GM10248 (cell line): ENCODE measurements at regions of chr18 and their contacts with region 1.

Region 1: DNA sequence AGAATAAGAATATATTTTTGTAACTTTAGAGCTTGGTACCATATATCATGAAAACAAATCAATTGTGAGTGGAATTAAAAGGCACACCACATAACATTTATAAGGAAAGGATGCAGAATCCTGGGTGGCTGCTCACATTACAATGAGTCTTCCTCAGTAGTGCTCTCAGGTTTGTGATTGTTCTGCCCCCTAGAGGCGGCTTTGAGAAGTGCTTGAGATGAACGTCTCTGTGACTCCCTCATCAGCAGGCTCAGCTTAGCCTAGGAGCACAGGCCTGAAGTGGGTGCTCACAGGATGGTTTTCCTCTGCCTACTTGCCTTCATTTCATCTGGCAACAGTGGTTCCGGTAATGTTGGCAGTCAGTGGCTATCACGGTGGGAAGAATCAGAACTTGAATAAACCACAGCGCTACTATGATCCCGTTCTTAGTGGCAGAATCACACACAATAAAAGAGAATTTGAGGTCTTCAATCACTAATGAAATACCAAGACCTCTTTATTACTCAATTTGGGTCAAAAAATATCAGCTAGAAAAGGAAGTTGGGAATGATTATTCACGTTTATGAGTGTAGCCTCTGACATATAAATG is 38.1 kb upstream of the B4GALT6 start:
- DNase-seq: peak; percentile 79
- CTCF ChIP-seq: peak; percentile 89

Region 2: DNA sequence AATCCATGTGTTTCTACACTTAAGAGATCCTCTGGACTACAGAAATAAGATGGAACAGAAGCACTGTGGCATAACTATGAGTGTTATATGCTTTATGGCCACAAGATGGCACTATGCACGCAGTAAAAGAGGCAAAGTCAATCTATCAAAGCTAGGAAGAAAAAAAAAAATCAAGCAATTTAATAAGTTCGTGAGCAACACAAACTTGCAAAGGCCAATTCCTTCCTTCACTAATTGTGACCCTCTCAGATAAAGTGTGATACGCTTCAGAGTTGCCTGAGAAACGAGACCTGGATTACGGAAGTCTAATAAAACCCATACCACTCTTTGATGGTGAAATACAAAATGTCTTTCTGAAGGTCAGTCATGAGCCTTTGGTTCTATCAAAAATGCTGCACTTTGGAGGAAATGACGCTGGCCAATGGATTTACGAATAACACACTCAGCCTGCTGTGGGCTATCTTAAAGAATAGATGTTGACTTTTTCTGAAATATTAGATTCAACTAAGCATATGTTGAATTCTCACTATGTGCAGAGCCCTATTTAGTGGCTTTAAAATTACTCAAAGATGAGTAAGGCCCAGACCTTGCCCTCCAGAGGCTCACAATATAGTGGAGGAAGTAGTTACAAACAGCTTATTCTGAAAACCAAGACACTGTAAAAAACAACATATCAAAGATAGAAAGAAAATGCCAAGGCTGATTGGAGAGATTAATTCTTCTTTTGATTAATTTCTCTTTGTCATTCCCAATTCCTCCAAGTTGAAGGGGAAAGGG is 166.3 kb before region 1 on chr18:
- CTCF ChIA-PET with region 1: interaction called, 69 read pairs
- POLR2A ChIA-PET with region 1: no interaction called
- DNase-seq: peak; percentile 60
- CTCF ChIP-seq: peak; percentile 68

Region 3: DNA sequence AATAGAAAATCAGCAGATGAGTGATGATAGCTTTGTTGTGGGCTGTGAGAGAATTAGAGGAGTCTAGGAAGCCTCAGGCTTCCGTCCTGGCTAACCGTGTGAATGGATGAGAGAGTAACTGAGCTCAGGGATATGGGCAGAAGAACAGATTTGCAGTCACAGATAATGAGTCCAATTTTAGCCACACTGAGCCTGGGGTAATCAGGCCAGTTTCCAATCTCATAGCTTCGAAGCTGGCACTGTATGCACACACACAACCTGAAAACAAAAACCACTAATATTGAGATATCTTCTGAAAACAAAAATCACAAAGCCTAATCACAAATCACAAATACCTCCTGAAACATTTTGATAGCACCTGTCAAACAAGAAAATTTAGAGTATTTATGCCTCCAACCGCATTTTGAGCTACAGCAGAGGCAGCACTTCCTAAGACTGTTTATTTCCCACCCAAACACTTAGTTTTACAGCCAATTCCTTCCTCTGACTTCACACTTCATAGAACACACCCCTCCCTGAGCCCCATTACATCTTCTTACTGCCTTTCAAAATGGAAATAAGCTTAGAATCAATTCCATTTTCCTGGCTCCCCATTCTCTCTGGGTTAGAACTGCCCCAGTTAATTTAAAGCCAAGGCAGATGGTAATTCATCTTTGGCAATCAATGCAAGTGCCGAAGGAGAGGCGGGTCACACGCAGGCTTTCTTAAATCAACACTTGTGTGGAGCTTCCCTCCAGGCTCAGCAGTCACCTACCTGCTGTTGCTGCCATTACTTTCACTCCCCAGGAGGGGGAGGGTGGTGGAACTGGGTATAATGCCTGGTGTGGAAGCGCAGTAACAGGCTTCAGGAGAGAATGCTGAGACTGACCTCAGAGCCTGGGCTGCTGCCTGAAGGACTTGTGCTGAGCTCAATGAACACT is 111.9 kb before region 1 on chr18:
- CTCF ChIA-PET with region 1: interaction called, 23 read pairs
- POLR2A ChIA-PET with region 1: no interaction called
- DNase-seq: no peak
- CTCF ChIP-seq: no peak

Region 4: GRCh38 chr18:31684279-31685096 is 38.0 kb before region 1 on chr18 and contains the start of gene B4GALT6:
- CTCF ChIA-PET with region 1: interaction called, 33 read pairs
- POLR2A ChIA-PET with region 1: no interaction called
- DNase-seq: peak; percentile 73
- CTCF ChIP-seq: peak; percentile 4

Region 5: DNA sequence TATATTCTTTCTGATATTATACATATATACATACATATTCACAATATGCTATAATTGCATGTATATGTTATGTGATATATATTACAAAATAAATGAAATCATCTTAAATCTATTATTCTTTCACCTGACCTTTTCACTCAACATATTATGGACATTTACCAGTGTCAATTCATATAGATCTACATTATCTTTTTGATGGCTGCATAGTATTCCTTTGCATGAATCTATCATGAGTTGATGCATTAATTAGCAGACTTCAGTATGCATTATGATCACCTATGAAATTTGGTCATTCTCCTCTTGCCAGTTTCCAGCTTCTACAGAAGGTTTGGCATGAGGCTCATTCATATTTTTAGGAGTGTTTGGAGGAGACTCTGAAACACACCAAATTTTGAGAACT is 14.6 kb before region 1 on chr18:
- CTCF ChIA-PET with region 1: interaction called, 55 read pairs
- POLR2A ChIA-PET with region 1: no interaction called
- DNase-seq: no peak
- CTCF ChIP-seq: no peak

Region 6: DNA sequence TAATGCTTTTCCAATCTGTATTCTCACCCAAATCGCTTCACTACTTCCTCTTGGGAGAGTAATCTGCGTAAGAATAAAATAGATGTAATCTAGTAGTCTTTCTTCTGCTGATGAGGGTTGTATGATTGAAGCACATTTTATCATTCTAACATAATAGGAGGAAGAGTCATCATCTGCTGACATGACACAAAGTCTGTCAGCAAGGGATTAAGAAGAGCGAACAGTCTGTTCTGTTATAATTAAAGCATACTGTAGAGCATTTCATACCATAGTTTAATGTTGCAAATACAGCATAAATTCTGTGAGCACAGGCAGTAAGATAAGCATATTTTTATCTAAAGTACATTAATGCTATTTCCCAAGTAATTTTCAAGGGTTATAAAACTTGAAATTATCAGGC is 27.8 kb after region 1 on chr18:
- CTCF ChIA-PET with region 1: interaction called, 35 read pairs
- POLR2A ChIA-PET with region 1: no interaction called
- DNase-seq: no peak
- CTCF ChIP-seq: no peak